Activated T-helper 1 cell treated with anti-CD3 and anti-CD28 coated beads, Interleukin-12 subunit alpha, Interleukin-12 subunit beta, Interleukin-2, Interleukin-4 antibody, amounts not matched to agents 30 ng/mL and 10 ng/mL and 1 ng/mL, durations not matched to agents 14 hours and 24 hours and 36 hours (primary cell): ENCODE measurements at regions of chr1 and their contacts with region 1.

Region 1: GRCh38 chr1:145978854-145979759 is 14.6 kb downstream of the POLR3GL start:
- DNase-seq: peak; percentile 87
- H3K4me3 Mint-ChIP-seq: no peak overlapping the region
- H3K27ac Mint-ChIP-seq: no peak overlapping the region
- H3K4me1 Mint-ChIP-seq: peaks cover 9% of the 10 kb centered on the region
- H3K27me3 Mint-ChIP-seq: no peaks in the 10 kb centered on the region

Region 2: GRCh38 chr1:145927063-145927886 is 51.8 kb before region 1 on chr1 and contains the start of gene RBM8A:
- intact Hi-C with region 1: loop called (anchors 1 kb)
- DNase-seq: peak; percentile 93
- H3K4me3 Mint-ChIP-seq: no peak within 1 kb of the TSS
- H3K27ac Mint-ChIP-seq: peak within 1 kb of the TSS; percentile 20
- H3K4me1 Mint-ChIP-seq: peaks cover 11% of the 10 kb centered on the region
- H3K27me3 Mint-ChIP-seq: no peaks in the 10 kb centered on the region
- total RNA-seq, gene RBM8A: 331 and 354 TPM in 2 replicates

Region 3: DNA sequence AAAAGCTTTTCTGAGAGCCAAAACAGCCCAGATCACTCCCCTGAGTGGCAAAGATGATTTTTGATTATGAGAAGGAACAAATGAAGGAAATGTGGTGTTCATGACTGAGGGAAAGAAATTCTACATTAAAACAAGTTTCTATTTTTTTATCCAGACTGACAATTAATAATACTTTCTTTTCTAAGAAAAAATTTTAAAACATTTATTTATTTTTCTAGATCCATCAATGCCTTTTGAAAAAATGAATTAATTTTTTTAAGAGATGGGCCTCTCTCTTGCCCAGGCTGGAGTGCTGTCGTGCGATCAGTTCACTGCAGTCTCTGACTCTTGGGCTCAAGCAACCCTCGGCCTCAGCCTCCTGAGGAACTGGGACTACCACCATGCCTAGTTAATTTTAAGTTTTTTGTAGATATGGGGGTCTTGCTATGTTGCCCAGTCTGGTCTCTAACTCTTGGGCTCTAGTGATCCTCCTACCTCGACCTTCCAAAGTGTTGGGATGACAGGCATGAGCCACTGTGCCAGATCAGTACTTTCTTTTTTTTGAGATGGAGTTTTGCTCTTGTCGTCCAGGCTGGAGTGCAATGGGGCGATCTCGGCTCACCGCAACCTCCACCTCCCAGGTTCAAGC is 28.5 kb after region 1 on chr1:
- intact Hi-C with region 1: loop called (anchors 1 kb)
- DNase-seq: no peak
- H3K4me3 Mint-ChIP-seq: no peak overlapping the region
- H3K27ac Mint-ChIP-seq: peak overlapping the region; percentile 76
- H3K4me1 Mint-ChIP-seq: peaks cover 41% of the 10 kb centered on the region
- H3K27me3 Mint-ChIP-seq: no peaks in the 10 kb centered on the region

Region 4: DNA sequence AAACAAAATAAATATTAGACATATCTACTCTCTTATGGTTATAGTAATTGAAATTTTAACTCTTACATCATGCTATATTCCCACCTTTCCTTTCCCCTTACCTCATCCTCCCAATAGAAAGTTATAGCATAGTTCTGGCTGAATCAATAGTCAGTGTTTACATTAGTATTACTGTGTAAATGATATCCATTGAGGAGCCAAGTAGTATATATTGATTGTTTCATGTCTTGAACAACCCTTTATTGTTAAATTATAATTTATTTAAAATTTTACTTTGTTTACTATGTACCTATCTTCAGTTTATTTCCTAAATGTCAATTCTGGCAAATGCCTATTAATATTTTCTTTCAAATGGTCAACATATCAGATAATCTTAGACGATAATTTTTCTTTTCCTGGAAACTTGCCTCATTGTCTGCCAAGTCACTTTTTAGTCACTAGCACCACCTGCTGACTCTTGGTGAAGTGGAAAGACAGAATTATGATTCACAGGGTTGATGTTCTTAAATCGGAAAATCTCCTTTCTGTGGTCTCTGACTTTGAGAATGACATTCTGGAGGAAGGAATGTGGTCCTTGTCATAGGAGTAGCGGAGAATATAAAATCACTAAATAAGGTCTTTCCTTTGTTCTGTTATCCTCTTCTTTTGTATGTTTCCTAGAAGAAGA is 33.8 kb after region 1 on chr1:
- intact Hi-C with region 1: loop called (anchors 1 kb)
- DNase-seq: peak; percentile 49
- H3K4me3 Mint-ChIP-seq: no peak overlapping the region
- H3K27ac Mint-ChIP-seq: no peak overlapping the region
- H3K4me1 Mint-ChIP-seq: peaks cover 13% of the 10 kb centered on the region
- H3K27me3 Mint-ChIP-seq: peaks cover 33% of the 10 kb centered on the region

Region 5: DNA sequence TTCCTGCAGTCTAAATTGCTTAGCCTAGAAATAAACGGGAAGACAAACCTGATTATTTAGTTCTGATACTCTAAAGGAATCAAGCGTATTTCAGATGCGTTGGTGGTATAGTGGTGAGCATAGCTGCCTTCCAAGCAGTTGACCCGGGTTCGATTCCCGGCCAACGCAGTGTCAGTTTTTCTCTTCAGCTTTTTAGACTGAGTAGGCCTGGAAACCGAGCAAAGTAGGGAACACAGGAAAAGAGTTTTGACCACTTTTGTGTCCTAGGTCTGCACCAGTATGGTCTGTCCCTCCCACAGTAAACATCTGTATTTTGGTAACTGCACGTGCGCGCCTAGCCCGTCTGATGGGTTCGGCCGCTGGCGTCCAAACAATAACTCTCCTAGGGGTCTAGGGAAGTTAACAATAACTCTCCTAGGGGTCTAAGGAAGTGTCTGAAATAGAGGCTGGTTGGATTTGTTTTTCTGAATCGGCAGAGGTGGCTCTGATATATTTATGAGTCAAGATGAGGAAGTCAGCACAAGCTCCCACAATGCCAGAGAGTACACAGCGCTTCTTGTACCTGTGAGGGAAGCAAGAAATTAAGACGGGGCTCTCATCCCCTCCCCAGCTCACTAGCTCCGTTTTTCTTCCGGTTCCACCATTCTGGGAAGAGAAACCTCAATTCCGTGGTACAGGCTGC is 58.0 kb after region 1 on chr1:
- intact Hi-C with region 1: loop called (anchors 1 kb)
- DNase-seq: peak; percentile 70
- H3K4me3 Mint-ChIP-seq: peak overlapping the region; percentile 93
- H3K27ac Mint-ChIP-seq: peak overlapping the region; percentile 98
- H3K4me1 Mint-ChIP-seq: peaks cover 50% of the 10 kb centered on the region
- H3K27me3 Mint-ChIP-seq: peaks cover 24% of the 10 kb centered on the region